HCT116 (cell line): ENCODE measurements at regions of chr2 and their contacts with region 1.

Region 1: DNA sequence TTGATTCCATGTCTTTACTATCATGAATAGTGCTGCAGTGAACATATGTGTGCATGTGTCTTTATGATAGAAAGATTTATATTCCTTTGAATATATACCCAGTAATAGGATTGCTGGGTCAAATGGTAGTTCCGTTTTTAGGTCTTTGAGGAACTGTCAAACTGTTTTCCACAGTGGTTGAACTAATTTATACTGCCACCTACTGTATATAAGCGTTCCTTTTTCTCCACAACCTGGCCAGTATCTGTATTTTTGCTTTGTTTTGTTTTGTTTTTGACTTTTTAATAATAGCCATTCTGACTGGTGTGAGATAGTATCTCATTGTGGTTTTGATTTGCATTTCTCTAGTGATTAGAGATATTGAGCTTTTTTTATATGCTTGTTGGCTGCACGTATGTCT is 641.6 kb downstream of the SUCLG1 start:
- DNase-seq: peak; percentile 3
- ATAC-seq: peak; percentile 60
- H3K4me3 ChIP-seq: no peak overlapping the region
- H3K27ac ChIP-seq: no peak overlapping the region
- H3K4me1 ChIP-seq: no peaks in the 10 kb centered on the region
- H3K27me3 ChIP-seq: no peaks in the 10 kb centered on the region
- CTCF ChIP-seq: peak; percentile 16 to 51 (median 31); a peak in 3 of 6 replicates
- POLR2A ChIP-seq: no peak
- RAD21 ChIP-seq: peak; percentile 59

Region 2: GRCh38 chr2:83572400-83572799 is 245.1 kb before region 1 on chr2:
- CTCF ChIA-PET with region 1: no interaction called
- POLR2A ChIA-PET with region 1: no interaction called
- RAD21 ChIA-PET with region 1: no interaction called
- intact Hi-C with region 1: loop called (anchors 10 kb)
- DNase-seq: no peak
- ATAC-seq: no peak
- H3K4me3 ChIP-seq: no peak overlapping the region
- H3K27ac ChIP-seq: no peak overlapping the region
- H3K4me1 ChIP-seq: 0 out of 4 replicates have a peak, but pooled peaks cover 0 to 2% of the 10 kb centered on the region in 2 experiments
- H3K27me3 ChIP-seq: no peaks in the 10 kb centered on the region
- CTCF ChIP-seq: no peak
- POLR2A ChIP-seq: no peak
- RAD21 ChIP-seq: no peak

Region 3: GRCh38 chr2:84055816-84056215 is 238.3 kb after region 1 on chr2:
- CTCF ChIA-PET with region 1: no interaction called
- POLR2A ChIA-PET with region 1: no interaction called
- RAD21 ChIA-PET with region 1: no interaction called
- intact Hi-C with region 1: no loop called
- DNase-seq: no peak
- ATAC-seq: no peak
- H3K4me3 ChIP-seq: no peak overlapping the region
- H3K27ac ChIP-seq: no peak overlapping the region
- H3K4me1 ChIP-seq: no peaks in the 10 kb centered on the region
- H3K27me3 ChIP-seq: no peaks in the 10 kb centered on the region
- CTCF ChIP-seq: no peak
- POLR2A ChIP-seq: no peak
- RAD21 ChIP-seq: no peak